Ascending aorta (tissue), 2 donors: ENCODE measurements at regions of chr14 and their contacts with region 1.

Region 1: DNA sequence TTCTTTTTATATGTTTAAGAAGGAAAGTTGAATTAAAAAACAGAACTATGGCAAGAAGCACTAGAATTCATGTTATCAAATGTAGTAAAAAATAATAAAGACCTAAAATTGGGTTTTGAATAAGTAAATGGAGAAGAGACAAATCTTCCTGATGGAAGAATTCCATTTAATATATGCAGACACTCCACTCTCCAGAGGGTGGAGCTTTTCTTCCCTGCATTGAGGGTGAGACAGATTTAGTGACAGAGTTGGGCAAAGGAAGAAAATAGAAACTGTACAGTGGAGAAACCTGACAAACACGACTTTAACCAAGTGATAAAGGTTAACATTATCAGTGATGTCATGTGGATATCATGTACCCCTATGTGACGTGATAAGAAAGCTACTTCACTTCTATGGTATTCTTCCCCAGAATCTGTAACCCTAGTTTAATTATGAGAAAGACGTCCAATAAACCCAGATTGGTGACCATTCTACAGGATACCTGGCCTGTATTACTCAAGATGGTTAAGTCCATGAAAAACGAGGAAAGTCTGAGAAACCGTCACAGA is 217.6 kb downstream of the PRKD1 start:
- DNase-seq: no peak
- H3K4me3 ChIP-seq: no peak overlapping the region
- H3K27ac ChIP-seq: no peak overlapping the region
- H3K4me1 ChIP-seq: no peaks in the 10 kb centered on the region
- H3K27me3 ChIP-seq: no peaks in the 10 kb centered on the region
- CTCF ChIP-seq: peak in 1 of 3 experiments; percentile 23

Region 2: DNA sequence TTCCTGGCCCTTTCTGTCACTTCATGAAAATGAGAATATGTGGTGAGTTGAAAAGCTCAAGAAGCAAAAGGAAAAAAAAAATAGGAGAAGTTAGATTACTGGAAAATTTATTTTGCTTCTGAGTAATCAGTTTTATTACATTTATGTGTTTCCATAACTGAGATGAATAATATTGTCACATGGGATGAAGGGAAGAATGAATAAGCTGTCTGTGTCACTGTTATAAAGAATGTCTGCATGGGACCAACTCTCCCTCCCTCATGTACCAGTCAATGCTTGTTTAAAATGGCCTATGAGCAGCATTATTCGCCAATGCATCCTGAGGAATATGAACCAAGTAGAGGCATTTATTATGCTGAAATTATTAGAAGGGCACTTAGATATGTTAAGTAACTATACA is 28.8 kb before region 1 on chr14:
- intact Hi-C with region 1: no loop called
- DNase-seq: no peak
- H3K4me3 ChIP-seq: no peak overlapping the region
- H3K27ac ChIP-seq: no peak overlapping the region
- H3K4me1 ChIP-seq: peaks cover 0 to 4% of the 10 kb centered on the region in 2 donors
- H3K27me3 ChIP-seq: no peaks in the 10 kb centered on the region
- CTCF ChIP-seq: no peak

Region 3: GRCh38 chr14:30005114-30005808 is 295.2 kb after region 1 on chr14:
- intact Hi-C with region 1: loop called (anchors 5 kb)
- DNase-seq: no peak
- H3K4me3 ChIP-seq: peak overlapping the region in 1 of 2 donors; percentile 21
- H3K27ac ChIP-seq: no peak overlapping the region
- H3K4me1 ChIP-seq: no peaks in the 10 kb centered on the region
- H3K27me3 ChIP-seq: no peaks in the 10 kb centered on the region
- CTCF ChIP-seq: peak; percentile 48 to 83 (median 64)